Activated CD4-positive, alpha-beta memory T cell treated with anti-CD3 and anti-CD28 coated beads, Interleukin-2, amount 10 ng/mL, durations not matched to agents 7 days and 5 days (primary cell): ENCODE measurements at regions of chr11 and their contacts with region 1.

Region 1: DNA sequence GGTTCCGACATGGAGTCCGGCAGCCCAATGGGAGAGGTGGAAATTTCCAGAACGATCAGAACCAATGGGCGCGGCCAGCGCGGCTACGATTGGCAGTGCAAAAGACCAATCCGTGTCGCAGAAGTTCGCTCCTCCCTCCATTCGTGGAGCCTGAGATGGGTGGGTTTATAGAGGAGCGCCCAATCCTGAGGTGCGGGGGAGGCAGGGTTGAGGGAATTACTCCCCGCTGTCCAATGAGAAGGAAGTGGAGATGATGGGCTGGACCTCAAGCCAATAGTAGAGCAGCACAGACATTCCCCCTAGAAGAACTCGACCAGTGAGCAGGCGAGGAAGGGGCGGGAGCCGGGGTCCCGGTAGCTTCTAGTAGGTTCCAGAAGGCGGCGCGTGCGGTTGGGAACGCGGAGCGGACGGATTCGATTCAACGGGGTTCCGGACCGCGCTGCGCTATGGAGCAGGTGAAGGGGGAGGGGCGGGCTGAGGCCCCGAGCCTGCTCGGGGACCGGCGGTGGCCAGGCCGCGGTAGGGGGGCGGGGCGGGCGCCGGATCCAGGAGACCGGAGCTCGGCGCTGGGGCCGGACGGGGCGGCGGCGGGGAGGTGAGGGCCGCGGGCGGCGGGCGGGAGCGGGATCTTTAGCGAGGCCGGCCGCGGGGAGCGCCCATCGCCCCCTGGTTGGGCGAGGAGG is at the start of gene STIP1:
- DNase-seq: peak; percentile 99
- H3K4me3 Mint-ChIP-seq: no peak within 1 kb of the TSS
- H3K27ac Mint-ChIP-seq: peak within 1 kb of the TSS; percentile 99
- H3K4me1 Mint-ChIP-seq: peaks cover 56% of the 10 kb centered on the region
- H3K27me3 Mint-ChIP-seq: no peaks in the 10 kb centered on the region
- total RNA-seq, gene STIP1: 258 to 269 TPM

Region 2: GRCh38 chr11:64173616-64174355 is 12.2 kb before region 1 on chr11:
- CTCF ChIA-PET with region 1: interaction called, 6 read pairs
- POLR2A ChIA-PET with region 1: interaction called, 20 read pairs
- DNase-seq: no peak
- H3K4me3 Mint-ChIP-seq: no peak overlapping the region
- H3K27ac Mint-ChIP-seq: no peak overlapping the region
- H3K4me1 Mint-ChIP-seq: peaks cover 22% of the 10 kb centered on the region
- H3K27me3 Mint-ChIP-seq: no peaks in the 10 kb centered on the region

Region 3: GRCh38 chr11:64204464-64204989 is 18.6 kb after region 1 on chr11:
- CTCF ChIA-PET with region 1: interaction called, 71 read pairs
- POLR2A ChIA-PET with region 1: interaction called, 272 read pairs
- DNase-seq: peak; percentile 84
- H3K4me3 Mint-ChIP-seq: peak overlapping the region; percentile 48
- H3K27ac Mint-ChIP-seq: peak overlapping the region; percentile 81
- H3K4me1 Mint-ChIP-seq: peaks cover 52% of the 10 kb centered on the region
- H3K27me3 Mint-ChIP-seq: no peaks in the 10 kb centered on the region

Region 4: DNA sequence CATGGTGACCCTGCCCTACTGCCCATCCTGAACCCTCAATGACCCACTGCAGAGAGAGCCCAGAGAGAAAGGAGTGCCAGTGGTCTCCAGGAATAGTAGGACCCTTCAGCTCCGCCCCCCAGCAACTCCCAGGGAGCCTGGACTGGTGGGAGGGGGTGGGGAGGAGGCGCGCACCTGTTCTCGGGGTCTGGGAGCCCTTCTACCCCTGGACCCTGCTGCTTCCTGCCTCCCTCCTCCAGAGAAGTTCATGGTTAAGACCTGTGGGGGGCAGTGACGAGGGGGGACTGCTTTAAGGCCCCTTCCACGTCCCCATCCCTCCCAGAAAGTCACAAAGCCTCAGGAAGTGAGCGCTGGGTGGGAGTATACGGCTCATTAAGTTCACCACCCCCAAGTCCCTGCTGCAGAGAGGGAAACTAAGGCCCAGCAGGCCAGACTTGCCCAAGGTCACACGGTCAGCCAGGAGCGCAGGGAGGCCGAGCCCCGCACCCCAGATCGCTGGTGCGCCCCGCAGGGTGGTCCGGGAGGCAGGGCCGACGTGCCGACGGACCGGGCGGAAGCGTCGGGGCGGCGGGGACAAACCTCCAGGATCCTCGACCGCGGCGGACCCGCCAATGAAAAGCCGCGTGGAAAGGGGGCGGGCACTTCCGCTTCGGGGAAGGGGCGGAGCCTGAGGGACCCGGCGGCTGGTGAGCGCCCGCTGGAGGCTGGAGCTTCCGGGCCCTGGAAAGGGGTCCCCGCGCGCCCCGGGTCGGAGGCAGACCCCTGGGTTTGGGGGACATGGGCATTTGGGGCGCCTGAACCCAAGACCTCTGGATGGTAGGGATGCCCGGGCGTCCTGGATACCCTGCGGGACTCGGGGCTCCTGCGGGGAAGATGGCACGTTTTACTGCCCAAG is 39.9 kb after region 1 on chr11 and contains the starts of genes NUDT22 and TRPT1:
- CTCF ChIA-PET with region 1: interaction called, 7 read pairs
- POLR2A ChIA-PET with region 1: interaction called, 28 read pairs
- DNase-seq: peak; percentile 94
- H3K4me3 Mint-ChIP-seq: peak within 1 kb of the TSS; percentile 88
- H3K27ac Mint-ChIP-seq: peak within 1 kb of the TSS; percentile 79
- H3K4me1 Mint-ChIP-seq: peaks cover 40% of the 10 kb centered on the region
- H3K27me3 Mint-ChIP-seq: no peaks in the 10 kb centered on the region
- total RNA-seq, gene NUDT22: 84.8 to 90.6 TPM
- total RNA-seq, gene TRPT1: 34.7 to 35.3 TPM

Region 5: DNA sequence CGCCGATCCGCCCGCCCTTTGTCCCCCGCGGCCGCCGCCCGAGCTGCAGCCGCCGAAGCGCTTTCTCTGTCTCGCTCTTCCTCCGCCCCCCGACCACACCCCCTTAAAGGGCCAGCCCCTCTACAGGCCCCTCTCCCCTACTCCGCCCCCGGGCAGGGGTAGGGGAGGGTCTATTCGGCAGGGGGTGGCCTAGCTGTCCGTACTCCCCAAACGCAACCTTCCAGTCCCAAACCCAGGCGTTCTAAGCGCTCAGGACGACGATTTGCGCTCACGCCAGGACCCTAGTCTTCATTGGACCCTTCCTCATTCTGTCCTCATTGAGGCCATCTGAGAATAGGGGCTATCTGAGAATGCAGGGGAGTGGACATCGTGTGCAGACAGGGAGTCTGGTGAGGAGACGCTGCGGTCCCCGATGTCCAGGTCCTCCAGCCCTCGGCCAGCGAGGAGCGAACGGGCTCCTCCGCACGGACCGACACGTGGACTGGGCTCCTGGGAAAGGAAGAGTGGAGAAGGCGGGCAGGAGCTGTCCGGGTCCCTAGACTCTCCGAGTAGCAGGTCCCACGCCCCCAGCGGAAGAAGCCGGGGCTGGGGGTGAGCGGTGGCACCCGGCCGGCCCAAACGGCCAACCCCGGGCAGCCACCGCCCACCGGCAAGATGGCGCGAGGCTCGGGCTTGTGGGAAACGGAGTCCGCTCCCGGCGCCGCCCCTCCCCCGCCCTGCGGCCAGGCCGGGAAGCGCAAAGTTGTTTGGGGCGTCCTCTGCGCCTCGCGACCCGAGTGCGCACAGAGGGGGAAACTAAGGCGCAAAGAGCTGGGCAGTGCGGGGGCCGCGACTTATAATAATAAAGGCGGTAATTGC is 61.1 kb after region 1 on chr11 and contains the start of gene PPP1R14B:
- CTCF ChIA-PET with region 1: no interaction called
- POLR2A ChIA-PET with region 1: interaction called, 14 read pairs
- DNase-seq: peak; percentile 84
- H3K4me3 Mint-ChIP-seq: peak within 1 kb of the TSS; percentile 86
- H3K27ac Mint-ChIP-seq: peak within 1 kb of the TSS; percentile 85
- H3K4me1 Mint-ChIP-seq: peaks cover 53% of the 10 kb centered on the region
- H3K27me3 Mint-ChIP-seq: peaks cover 3% of the 10 kb centered on the region
- total RNA-seq, gene PPP1R14B: 96.9 to 105 TPM

Region 6: DNA sequence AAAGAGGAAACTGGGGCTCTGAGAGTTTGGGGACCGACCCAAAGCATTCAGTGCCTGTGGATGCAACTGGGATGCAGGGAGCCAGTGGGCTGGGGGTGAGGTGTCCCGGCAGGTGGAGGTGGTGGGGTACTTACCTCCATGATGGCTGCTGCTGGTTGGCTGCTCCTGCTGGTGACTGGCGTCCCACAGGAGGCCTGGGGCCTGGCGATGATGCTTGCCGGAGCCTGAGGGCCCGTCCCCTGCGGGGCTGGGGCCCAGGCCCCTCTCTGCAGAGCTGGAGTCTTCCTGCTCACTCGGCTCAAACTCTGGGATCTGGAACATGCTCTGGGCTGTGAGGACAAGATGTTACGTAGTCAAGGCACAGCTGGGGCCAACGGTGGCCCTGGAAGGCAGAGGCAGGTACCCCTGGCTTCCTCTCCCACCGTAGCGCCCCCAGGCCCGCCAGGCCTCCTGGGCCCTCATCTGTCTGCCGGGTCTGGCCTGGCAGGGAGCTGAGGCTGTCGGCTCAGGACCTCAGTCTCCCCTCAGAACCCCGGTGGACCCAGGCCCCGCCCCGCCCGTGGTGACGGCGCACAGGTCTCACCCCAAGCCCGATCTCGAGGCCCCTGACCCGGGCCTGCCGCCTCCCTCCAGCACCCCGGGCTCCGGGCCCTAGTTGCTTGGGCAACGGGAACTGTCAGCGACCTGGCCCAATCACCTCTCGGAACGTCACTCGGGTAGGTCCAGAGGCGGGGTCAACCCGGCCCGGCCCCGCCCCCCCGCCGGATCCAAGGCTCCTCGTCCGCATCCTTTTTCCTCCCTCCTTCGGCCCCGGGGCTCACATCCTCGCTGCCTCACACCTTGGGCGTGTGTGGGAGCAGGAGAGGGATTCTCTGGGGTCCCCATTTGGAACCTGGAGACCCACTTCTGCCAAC is 98.3 kb after region 1 on chr11 and contains the start of gene BAD:
- CTCF ChIA-PET with region 1: interaction called, 3 read pairs
- POLR2A ChIA-PET with region 1: interaction called, 12 read pairs
- DNase-seq: peak; percentile 95
- H3K4me3 Mint-ChIP-seq: peak within 1 kb of the TSS; percentile 83
- H3K27ac Mint-ChIP-seq: peak within 1 kb of the TSS; percentile 82
- H3K4me1 Mint-ChIP-seq: peaks cover 28% of the 10 kb centered on the region
- H3K27me3 Mint-ChIP-seq: no peaks in the 10 kb centered on the region
- total RNA-seq, gene BAD: 36.5 to 39.2 TPM